K562 (cell line): ENCODE measurements at regions of chr10 and their contacts with region 1.

Region 1: DNA sequence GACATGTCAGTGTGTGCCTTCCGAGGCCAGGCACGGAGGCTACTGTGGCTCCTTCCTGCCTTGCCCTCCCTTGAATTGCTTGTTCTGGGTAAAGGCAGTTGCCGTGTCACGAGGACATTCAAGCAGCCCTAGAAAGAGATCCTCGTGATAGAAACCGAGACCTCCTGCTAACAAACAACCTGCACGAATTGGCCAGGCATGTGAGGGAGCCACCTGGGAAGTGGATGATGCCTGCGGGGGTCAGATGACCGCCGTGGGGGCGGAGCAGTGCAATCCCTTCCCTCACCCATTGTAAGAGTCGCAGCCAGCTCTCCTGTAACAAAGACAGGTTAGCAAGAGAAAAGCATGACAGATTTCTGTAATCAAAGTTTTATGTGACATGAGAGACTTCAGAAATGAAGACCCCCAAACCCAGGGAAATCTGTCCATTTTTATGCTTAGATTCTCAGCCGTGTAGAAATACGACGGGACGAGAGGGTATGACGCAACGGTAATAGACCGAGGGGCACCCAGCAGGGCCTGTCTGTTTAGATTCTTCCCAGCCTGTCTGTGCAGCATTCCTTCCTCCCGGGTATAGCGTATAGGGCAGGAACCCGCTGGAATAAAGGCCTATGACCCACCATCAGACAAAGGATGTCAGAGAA is 241.7 kb downstream of the GATA3 start:
- DNase-seq: no peak
- ATAC-seq: no peak
- H3K4me3 ChIP-seq: no peak overlapping the region
- H3K27ac ChIP-seq: no peak overlapping the region
- H3K4me1 ChIP-seq: no peaks in the 10 kb centered on the region
- H3K27me3 ChIP-seq: peaks cover 0 to 15% of the 10 kb centered on the region in 2 experiments; a peak in 2 of 5 replicates
- CTCF ChIP-seq: no peak
- EP300 ChIP-seq: no peak
- POLR2A ChIP-seq: no peak
- RAD21 ChIP-seq: no peak

Region 2: DNA sequence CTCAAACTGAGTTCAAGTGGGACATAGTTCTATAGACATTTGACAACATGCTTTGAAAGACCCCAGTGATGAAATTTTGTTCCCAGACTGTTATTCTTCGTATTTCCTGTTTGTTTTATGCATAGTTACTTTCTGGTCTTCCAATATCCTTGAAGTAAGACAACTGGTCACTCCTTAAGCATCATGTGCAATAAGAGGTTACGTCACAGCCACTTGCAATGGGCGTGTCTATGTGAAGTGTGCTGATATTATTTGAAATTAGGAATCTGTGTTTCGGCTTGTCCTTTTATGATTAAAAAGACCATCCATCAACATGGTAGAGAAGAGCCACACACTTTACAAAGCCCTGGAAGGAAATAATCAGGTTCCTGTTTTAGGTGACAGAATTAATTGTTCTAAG is 91.6 kb before region 1 on chr10:
- CTCF ChIA-PET with region 1: no interaction called
- POLR2A ChIA-PET with region 1: no interaction called
- in situ Hi-C with region 1: loop called (anchors 10 kb)
- intact Hi-C with region 1: no loop called
- DNase-seq: no peak
- ATAC-seq: no peak
- H3K4me3 ChIP-seq: no peak overlapping the region
- H3K27ac ChIP-seq: no peak overlapping the region
- H3K4me1 ChIP-seq: no peaks in the 10 kb centered on the region
- H3K27me3 ChIP-seq: peaks cover 0 to 5% of the 10 kb centered on the region in 2 experiments; a peak in 1 of 5 replicates
- CTCF ChIP-seq: no peak
- EP300 ChIP-seq: no peak
- POLR2A ChIP-seq: no peak
- RAD21 ChIP-seq: no peak

Region 3: GRCh38 chr10:9102043-9102442 is 805.8 kb after region 1 on chr10:
- CTCF ChIA-PET with region 1: no interaction called
- POLR2A ChIA-PET with region 1: no interaction called
- in situ Hi-C with region 1: no loop called
- intact Hi-C with region 1: no loop called
- DNase-seq: no peak
- ATAC-seq: no peak
- H3K4me3 ChIP-seq: no peak overlapping the region
- H3K27ac ChIP-seq: no peak overlapping the region
- H3K4me1 ChIP-seq: no peaks in the 10 kb centered on the region
- H3K27me3 ChIP-seq: no peaks in the 10 kb centered on the region
- CTCF ChIP-seq: no peak
- EP300 ChIP-seq: no peak
- POLR2A ChIP-seq: no peak
- RAD21 ChIP-seq: no peak